Calu3 (cell line): ENCODE measurements at regions of chr4 and their contacts with region 1.

Region 1: DNA sequence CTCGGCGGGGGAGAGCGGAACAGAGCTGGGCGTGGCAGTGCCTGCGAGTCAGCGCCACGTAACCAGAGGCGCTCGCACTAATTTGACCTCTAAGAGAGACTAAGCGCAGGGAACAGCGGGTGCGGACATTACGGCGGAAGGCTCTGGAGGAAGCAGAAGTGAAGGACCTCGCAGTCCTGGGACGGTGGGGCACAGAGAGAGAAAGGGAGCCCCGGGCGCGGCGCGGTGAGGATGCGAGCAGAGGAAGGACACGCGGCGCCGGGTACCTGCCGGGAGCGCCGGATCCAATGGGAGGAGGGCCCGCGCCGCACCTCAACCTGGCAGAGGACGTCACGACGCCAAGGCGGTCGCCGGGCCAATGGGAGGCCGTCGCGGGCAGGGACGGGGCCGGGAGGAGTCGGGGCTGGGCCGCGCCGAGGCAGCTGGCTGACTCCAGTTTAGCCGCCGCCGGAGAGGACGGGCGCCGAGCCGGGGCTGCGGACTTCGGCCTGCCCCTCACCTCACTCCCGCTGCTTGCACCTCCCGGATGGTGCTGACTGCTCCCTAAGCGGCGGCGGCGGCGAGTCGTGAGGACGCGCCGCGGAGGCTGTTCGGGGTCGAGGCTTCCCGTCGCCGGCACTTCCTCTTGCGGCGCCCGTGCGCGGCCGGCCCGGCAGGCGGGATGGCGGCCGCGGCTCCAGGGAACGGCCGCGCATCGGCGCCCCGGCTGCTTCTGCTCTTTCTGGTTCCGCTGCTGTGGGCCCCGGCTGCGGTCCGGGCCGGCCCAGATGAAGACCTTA is at the start of gene TMEM165:
- DNase-seq: peak; percentile 93
- H3K4me3 Mint-ChIP-seq: peak within 1 kb of the TSS; percentile 81
- H3K27ac Mint-ChIP-seq: peak within 1 kb of the TSS; percentile 87
- H3K4me1 Mint-ChIP-seq: peaks cover 23% of the 10 kb centered on the region
- H3K27me3 Mint-ChIP-seq: no peaks in the 10 kb centered on the region
- CTCF ChIP-seq: no peak
- total RNA-seq, gene TMEM165: 89.0 and 96.6 TPM in 2 replicates

Region 2: GRCh38 chr4:54971474-54971950 is 424.2 kb before region 1 on chr4:
- CTCF ChIA-PET with region 1: no interaction called
- intact Hi-C with region 1: loop called (anchors 5 kb)
- DNase-seq: peak; percentile 15
- H3K4me3 Mint-ChIP-seq: no peak overlapping the region
- H3K27ac Mint-ChIP-seq: no peak overlapping the region
- H3K4me1 Mint-ChIP-seq: peaks cover 8% of the 10 kb centered on the region
- H3K27me3 Mint-ChIP-seq: no peaks in the 10 kb centered on the region
- CTCF ChIP-seq: peak; percentile 69

Region 3: GRCh38 chr4:55345980-55346850 is 49.5 kb before region 1 on chr4 and contains the start of gene SRD5A3:
- CTCF ChIA-PET with region 1: interaction called, 3 read pairs
- intact Hi-C with region 1: loop called (anchors 5 kb)
- DNase-seq: peak; percentile 94
- H3K4me3 Mint-ChIP-seq: peak within 1 kb of the TSS; percentile 85
- H3K27ac Mint-ChIP-seq: peak within 1 kb of the TSS; percentile 56
- H3K4me1 Mint-ChIP-seq: peaks cover 15% of the 10 kb centered on the region
- H3K27me3 Mint-ChIP-seq: no peaks in the 10 kb centered on the region
- CTCF ChIP-seq: peak; percentile 91
- total RNA-seq, gene SRD5A3: 35.9 and 39.6 TPM in 2 replicates

Region 4: DNA sequence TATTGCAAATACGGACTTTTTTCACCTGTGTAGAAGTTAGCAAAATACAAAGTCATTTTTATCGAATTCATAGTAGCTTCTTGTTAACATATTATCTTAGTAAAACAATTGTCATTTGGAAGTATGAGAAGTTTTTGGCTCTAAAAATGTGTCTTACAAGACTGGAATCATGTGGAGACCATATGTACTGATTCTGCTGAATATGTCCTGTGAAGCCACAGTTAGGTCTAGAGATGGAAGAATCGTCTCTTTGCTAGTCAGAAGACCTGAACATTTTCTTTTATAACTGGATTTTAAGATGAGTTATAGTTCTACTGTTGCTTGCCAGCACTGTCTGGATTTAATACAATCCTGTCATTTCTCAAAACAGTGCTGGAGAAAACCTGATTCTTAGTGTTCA is 29.1 kb after region 1 on chr4:
- CTCF ChIA-PET with region 1: no interaction called
- intact Hi-C with region 1: no loop called
- DNase-seq: no peak
- H3K4me3 Mint-ChIP-seq: no peak overlapping the region
- H3K27ac Mint-ChIP-seq: no peak overlapping the region
- H3K4me1 Mint-ChIP-seq: no peaks in the 10 kb centered on the region
- H3K27me3 Mint-ChIP-seq: no peaks in the 10 kb centered on the region
- CTCF ChIP-seq: no peak

Region 5: DNA sequence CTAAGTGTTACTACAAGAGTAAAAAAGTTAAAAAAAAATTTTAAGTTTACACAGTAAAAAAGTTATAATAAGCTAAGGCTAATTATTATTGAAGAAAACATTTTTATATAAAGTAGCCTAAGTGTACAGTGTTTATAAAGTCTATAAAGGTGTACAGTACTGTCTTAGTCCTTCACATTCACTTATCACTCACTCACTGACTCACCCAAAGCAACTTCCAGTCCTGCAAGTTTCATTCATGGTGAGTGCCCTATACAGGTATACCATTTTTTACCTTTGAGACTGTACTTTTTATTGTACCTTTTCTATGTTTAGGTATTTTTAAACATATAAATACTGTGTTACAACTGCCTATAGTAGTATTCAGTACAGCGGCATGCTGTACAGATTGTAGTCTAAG is 74.3 kb after region 1 on chr4:
- CTCF ChIA-PET with region 1: no interaction called
- intact Hi-C with region 1: no loop called
- DNase-seq: no peak
- H3K4me3 Mint-ChIP-seq: no peak overlapping the region
- H3K27ac Mint-ChIP-seq: no peak overlapping the region
- H3K4me1 Mint-ChIP-seq: no peaks in the 10 kb centered on the region
- H3K27me3 Mint-ChIP-seq: no peaks in the 10 kb centered on the region
- CTCF ChIP-seq: no peak